ENCODE measurements at regions of chr6 and their contacts with region 1.

Region 1: DNA sequence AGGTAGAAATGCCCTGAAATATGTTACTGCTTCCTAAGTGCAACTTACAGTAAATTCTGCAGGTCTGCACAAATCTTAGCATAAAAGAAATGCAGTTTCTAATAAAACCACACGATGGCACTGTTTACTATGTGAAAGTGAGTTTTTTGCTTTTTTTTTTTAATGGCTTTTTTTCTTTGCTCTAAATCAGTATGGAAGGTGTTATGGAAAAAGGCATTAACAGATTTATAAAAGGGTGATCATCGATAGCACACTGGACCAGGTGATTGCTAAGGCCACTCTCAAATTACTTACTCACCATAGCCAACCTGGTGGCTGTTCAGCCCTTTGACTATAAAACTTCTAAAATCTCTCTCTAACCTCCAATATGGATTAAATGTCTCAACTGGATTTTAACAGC is 45.8 kb downstream of the AHI1 start:
- DNase-seq: peak; percentile 68
- ATAC-seq: no peak
- H3K4me3 ChIP-seq: no peak overlapping the region
- H3K27ac ChIP-seq: no peak overlapping the region
- H3K4me1 ChIP-seq: no peaks in the 10 kb centered on the region
- H3K27me3 ChIP-seq: no peaks in the 10 kb centered on the region
- CTCF ChIP-seq: peak; percentile 71

Region 2: DNA sequence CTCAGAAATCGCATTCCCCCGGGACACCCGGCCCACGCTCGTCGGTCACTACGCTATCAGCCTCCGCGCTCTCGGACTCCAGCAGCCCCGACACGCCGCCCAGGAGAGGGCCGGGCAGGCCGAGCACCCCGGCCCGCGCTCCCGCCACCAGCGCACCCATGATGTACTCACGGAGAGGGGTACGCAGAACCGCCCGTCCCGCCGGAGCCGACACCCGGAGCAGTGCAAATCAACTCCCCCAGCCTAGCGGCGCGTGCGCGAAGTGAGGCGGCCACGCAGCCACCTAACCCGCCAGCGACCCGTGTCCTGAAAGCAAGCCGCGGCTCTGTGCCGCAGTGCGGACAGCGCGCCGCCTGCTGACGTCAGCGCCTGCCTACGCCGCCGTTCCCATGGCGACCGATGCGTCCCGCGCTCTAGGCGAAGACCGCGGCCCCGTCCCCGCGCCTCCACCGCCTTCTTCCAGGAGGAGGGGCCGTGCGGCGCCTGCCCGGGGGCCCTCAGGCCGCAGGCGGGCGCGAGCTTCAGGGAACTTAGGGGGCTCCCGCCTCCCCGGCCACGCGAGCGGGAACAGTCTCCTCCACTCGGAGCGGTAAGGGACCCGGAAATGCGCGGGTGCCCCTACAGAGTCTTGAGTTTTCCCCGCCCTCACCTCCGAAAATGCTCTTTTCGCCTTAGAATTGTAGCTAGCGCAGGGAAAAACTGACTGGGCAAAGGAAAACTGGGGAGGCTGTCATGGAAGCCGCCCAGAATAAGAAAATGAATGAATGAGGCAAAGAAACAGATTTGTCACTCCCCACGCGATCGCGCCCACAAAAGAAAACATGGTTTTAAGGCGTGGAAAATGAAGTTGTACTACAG is 45.9 kb after region 1 on chr6 and contains the start of gene AHI1:
- CTCF ChIA-PET with region 1: no interaction called
- POLR2A ChIA-PET with region 1: no interaction called
- intact Hi-C with region 1: loop called (anchors 1 kb)
- DNase-seq: peak; percentile 88
- ATAC-seq: peak; percentile 77
- H3K4me3 ChIP-seq: peak within 1 kb of the TSS; percentile 80
- H3K27ac ChIP-seq: peak within 1 kb of the TSS; percentile 85
- H3K4me1 ChIP-seq: peaks cover 30% of the 10 kb centered on the region
- H3K27me3 ChIP-seq: no peaks in the 10 kb centered on the region
- CTCF ChIP-seq: no peak
- total RNA-seq, gene AHI1: 5.8 and 8.9 TPM in 2 replicates

Region 3: DNA sequence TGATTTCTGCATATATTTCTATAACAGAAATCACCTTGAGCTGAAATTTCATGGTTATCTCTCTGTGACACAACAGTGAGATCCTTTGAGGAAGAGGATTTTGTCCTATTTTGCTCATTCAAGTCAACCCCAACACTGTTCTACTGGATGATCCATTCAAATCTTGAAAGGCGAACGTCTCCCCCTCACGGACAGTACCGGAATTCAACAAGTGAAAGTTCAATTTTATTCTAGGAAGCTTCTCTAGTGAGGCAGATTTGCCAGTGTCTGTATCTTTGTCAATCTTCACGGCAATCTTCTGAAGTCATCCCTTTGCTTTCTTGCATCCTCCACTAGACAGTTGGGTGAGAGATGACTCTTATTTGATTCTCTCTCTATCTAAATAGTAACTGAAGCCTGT is 308.1 kb after region 1 on chr6:
- CTCF ChIA-PET with region 1: no interaction called
- POLR2A ChIA-PET with region 1: no interaction called
- intact Hi-C with region 1: loop called (anchors 10 kb)
- DNase-seq: peak; percentile 65
- ATAC-seq: no peak
- H3K4me3 ChIP-seq: no peak overlapping the region
- H3K27ac ChIP-seq: no peak overlapping the region
- H3K4me1 ChIP-seq: no peaks in the 10 kb centered on the region
- H3K27me3 ChIP-seq: no peaks in the 10 kb centered on the region
- CTCF ChIP-seq: peak; percentile 62

Region 4: GRCh38 chr6:135962731-135963130 is 511.0 kb after region 1 on chr6:
- CTCF ChIA-PET with region 1: no interaction called
- POLR2A ChIA-PET with region 1: no interaction called
- intact Hi-C with region 1: no loop called
- DNase-seq: no peak
- ATAC-seq: no peak
- H3K4me3 ChIP-seq: no peak overlapping the region
- H3K27ac ChIP-seq: no peak overlapping the region
- H3K4me1 ChIP-seq: no peaks in the 10 kb centered on the region
- H3K27me3 ChIP-seq: no peaks in the 10 kb centered on the region
- CTCF ChIP-seq: no peak

Region 5: DNA sequence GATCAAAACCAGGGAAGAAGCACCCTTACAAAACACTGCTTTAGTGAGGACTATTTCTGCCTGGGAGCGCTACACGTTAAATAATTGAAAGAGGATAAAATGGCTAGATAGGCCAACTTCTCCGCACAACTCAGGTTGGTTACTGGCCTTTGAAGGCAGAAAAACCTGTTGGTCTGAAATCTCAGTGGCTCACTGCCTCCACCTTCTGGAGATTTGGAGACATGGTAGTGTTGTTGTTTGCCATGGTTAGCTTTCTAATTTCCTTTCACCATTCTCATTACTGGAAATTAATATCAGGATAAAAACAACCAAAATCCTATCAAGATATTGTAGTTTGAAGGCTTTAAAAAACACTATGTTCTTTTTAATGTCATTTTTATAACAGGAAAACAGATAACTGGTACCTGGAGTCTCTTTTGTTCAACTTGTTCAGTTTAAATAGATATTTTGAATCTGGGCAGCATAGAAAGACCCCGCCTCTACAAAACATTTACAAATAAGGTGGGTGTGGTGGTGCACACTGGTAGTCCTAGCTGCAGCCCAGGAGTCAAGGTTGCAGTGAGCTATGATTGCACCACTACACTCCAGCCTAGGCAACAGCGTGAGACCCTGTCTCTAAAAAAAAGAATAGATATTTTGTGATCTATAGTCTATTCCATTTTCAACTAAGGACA is 865.5 kb after region 1 on chr6:
- CTCF ChIA-PET with region 1: no interaction called
- POLR2A ChIA-PET with region 1: no interaction called
- intact Hi-C with region 1: loop called (anchors 5 kb)
- DNase-seq: peak; percentile 75
- ATAC-seq: peak; percentile 67
- H3K4me3 ChIP-seq: no peak overlapping the region
- H3K27ac ChIP-seq: no peak overlapping the region
- H3K4me1 ChIP-seq: no peaks in the 10 kb centered on the region
- H3K27me3 ChIP-seq: no peaks in the 10 kb centered on the region
- CTCF ChIP-seq: peak; percentile 79